ENCODE measurements at regions of chrX and their contacts with region 1.

Region 1: DNA sequence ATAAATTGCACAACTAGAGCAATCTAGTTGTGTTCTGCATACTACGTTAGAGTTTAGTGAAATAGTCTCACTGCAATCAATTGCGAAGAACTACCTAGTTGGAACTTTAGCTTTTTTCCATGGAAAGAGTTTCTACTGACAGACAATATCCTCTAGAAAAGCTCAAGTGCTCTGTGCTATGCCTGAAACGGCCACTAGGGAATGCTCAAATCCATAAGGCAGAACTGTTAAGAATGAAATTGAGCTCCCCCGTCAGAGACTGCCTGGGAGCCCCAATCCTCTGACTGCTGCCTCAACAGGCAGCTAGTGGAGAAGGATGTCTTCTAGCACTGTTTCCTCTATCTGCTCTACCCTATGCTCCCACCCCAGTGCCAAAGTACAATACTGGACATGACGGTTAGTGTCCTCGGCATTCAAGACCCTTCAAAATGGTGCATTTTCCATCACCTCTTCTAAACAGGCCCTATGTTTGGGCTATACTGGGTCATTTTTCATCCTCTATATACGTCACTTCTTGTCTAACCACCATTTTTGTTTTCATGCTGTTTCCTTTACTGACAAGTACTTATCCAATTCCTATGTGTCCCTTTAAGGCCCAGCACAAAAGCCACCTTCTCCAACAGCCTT is 35.3 kb downstream of the FRMD7 start:
- DNase-seq: peak in 1 of 2 donors; percentile 21
- ATAC-seq: peak; percentile 56 to 83 (median 70)
- H3K4me3 ChIP-seq: no peak overlapping the region
- H3K27ac ChIP-seq: no peak overlapping the region
- H3K4me1 ChIP-seq: no peaks in the 10 kb centered on the region
- H3K27me3 ChIP-seq: peaks cover 0 to 7% (median 0%) of the 10 kb centered on the region in 3 donors
- CTCF ChIP-seq: peak; percentile 71

Region 2: DNA sequence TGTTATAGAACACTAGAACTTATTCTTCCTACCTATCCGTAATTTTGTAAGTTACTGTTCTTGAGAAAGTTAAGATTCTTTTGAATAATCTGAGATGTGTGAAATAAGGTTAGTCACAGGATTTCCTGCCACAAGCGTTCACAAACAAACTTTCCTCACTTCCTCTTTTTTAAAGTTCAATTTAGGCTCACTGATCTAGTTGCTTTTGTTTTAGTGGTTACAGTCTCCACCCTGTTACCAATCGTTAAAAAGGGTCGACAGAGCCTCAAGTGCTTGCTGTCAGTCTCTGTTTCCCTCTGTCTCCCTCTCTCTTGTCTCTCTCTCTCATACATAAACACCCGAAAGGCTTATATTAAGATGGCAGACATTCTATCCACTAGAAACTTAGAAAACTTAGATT is 105.3 kb before region 1 on chrX:
- intact Hi-C with region 1: no loop called
- DNase-seq: no peak
- ATAC-seq: no peak
- H3K4me3 ChIP-seq: no peak overlapping the region
- H3K27ac ChIP-seq: no peak overlapping the region
- H3K4me1 ChIP-seq: no peaks in the 10 kb centered on the region
- H3K27me3 ChIP-seq: peaks cover 0 to 21% (median 0%) of the 10 kb centered on the region in 3 donors
- CTCF ChIP-seq: no peak

Region 3: GRCh38 chrX:132219343-132219768 is 126.8 kb after region 1 on chrX and contains the start of gene RAP2C:
- intact Hi-C with region 1: loop called (anchors 2 to 10 kb)
- DNase-seq: peak; percentile 77 to 83
- ATAC-seq: peak; percentile 81 to 90 (median 88)
- H3K4me3 ChIP-seq: peak within 1 kb of the TSS; percentile 82
- H3K27ac ChIP-seq: peak within 1 kb of the TSS; percentile 93
- H3K4me1 ChIP-seq: peaks cover 9% of the 10 kb centered on the region
- H3K27me3 ChIP-seq: peaks cover 0 to 8% (median 0%) of the 10 kb centered on the region in 3 donors
- CTCF ChIP-seq: peak; percentile 55
- total RNA-seq, gene RAP2C: 16.6 to 25.7 (median 23.3) TPM

Region 4: DNA sequence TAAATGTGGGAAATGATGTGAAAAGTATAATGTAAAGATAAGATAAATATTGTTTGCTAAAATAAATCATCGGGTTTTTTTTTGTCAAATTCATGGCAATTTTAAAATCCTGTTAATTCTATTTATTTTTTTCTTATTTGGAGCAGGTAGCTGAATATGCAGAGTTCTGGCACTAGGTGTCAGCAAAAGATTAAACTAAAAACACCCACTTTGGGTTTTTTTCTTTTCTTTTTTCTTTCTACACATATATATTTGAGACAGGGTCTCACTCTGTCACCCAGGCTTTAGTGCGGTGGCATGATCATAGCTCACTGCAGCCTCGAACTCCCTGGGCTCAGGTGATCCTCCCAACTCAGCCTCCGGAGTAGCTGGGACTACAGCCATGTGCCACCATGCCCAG is 133.6 kb after region 1 on chrX:
- intact Hi-C with region 1: loop called in 1 of 2 experiments (anchors 10 kb)
- DNase-seq: no peak
- ATAC-seq: no peak
- H3K4me3 ChIP-seq: no peak overlapping the region
- H3K27ac ChIP-seq: no peak overlapping the region
- H3K4me1 ChIP-seq: no peaks in the 10 kb centered on the region
- H3K27me3 ChIP-seq: peaks cover 0 to 12% (median 0%) of the 10 kb centered on the region in 3 donors
- CTCF ChIP-seq: peak; percentile 18

Measured in psoas muscle (tissue), 8 donors.